Activated CD4-positive, alpha-beta T cell treated with anti-CD3 and anti-CD28 coated beads, Interleukin-2, amount 10 ng/mL, durations not matched to agents 24 days and 14 days (primary cell): ENCODE measurements at regions of chr3 and their contacts with region 1.

Region 1: GRCh38 chr3:158727206-158728060 is 4.8 kb downstream of the RARRES1 start:
- DNase-seq: peak; percentile 86
- H3K4me3 Mint-ChIP-seq: peak overlapping the region; percentile 50
- H3K27ac Mint-ChIP-seq: no peak overlapping the region
- H3K4me1 Mint-ChIP-seq: peaks cover 34% of the 10 kb centered on the region
- H3K27me3 Mint-ChIP-seq: no peaks in the 10 kb centered on the region

Region 2: DNA sequence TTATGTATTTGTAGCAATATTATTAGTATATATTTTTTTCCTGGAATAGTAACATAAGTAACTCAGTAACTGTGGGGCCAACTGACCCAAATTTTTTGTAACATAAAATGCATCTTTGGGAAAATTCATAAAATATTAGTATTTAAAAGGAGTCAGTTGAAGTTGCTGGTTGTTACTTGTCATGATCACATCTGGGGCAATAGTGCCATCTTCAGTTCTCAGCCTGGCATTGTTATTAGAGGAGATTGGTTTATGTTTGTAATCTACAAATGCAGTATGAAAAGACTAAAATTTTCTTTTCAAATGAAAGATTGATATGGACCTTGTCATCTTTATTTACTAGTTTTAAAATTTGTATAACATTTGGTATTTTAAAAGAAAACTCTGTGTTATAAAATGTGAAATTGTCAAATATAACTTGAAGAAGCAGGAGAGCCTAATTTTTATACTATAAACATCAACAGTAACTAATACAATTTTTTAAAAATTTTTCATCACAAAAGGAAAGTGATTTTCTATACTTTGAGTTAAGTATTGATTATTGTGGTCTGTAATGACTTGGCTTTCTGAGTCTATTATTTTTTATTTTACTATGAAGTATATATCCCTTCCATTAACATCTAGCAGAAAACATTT is 195.2 kb before region 1 on chr3:
- intact Hi-C with region 1: no loop called
- DNase-seq: no peak
- H3K4me3 Mint-ChIP-seq: no peak overlapping the region
- H3K27ac Mint-ChIP-seq: no peak overlapping the region
- H3K4me1 Mint-ChIP-seq: no peaks in the 10 kb centered on the region
- H3K27me3 Mint-ChIP-seq: no peaks in the 10 kb centered on the region

Region 3: GRCh38 chr3:158672293-158673176 is 54.9 kb before region 1 on chr3 and contains the start of gene LXN:
- intact Hi-C with region 1: loop called (anchors 5 kb)
- DNase-seq: peak; percentile 94
- H3K4me3 Mint-ChIP-seq: peak within 1 kb of the TSS; percentile 96
- H3K27ac Mint-ChIP-seq: peak within 1 kb of the TSS; percentile 95
- H3K4me1 Mint-ChIP-seq: peaks cover 24% of the 10 kb centered on the region
- H3K27me3 Mint-ChIP-seq: no peaks in the 10 kb centered on the region
- total RNA-seq, gene LXN: 15.1 and 16.2 TPM in 2 replicates

Region 4: DNA sequence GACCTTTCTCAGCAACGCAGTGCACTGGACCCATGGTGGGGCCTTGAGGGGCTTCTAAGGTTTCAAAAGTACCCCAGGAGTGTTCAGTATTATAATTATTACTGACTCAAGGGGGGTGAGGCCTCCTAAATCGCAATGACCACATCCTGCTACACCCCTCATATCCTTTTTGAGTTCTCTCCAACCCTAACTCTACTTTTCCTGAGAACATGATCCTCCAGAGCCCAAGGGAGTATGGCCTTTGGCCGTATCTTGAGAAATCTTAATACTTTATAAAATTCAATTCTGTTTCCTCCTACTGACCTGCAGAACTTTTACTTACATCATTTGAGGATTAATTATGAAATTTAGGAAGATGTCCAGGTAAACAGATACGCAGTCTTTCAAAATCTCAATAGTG is 35.3 kb after region 1 on chr3:
- intact Hi-C with region 1: no loop called
- DNase-seq: no peak
- H3K4me3 Mint-ChIP-seq: no peak overlapping the region
- H3K27ac Mint-ChIP-seq: no peak overlapping the region
- H3K4me1 Mint-ChIP-seq: no peaks in the 10 kb centered on the region
- H3K27me3 Mint-ChIP-seq: no peaks in the 10 kb centered on the region

Region 5: GRCh38 chr3:158773845-158774830 is 46.7 kb after region 1 on chr3:
- intact Hi-C with region 1: loop called (anchors 1 kb)
- DNase-seq: no peak
- H3K4me3 Mint-ChIP-seq: no peak overlapping the region
- H3K27ac Mint-ChIP-seq: no peak overlapping the region
- H3K4me1 Mint-ChIP-seq: peaks cover 4% of the 10 kb centered on the region
- H3K27me3 Mint-ChIP-seq: no peaks in the 10 kb centered on the region

Region 6: GRCh38 chr3:158819282-158819681 is 91.8 kb after region 1 on chr3:
- intact Hi-C with region 1: no loop called
- DNase-seq: no peak
- H3K4me3 Mint-ChIP-seq: no peak overlapping the region
- H3K27ac Mint-ChIP-seq: no peak overlapping the region
- H3K4me1 Mint-ChIP-seq: no peaks in the 10 kb centered on the region
- H3K27me3 Mint-ChIP-seq: no peaks in the 10 kb centered on the region